Ascending aorta (tissue), 2 donors: ENCODE measurements at regions of chr12 and their contacts with region 1.

Region 1: DNA sequence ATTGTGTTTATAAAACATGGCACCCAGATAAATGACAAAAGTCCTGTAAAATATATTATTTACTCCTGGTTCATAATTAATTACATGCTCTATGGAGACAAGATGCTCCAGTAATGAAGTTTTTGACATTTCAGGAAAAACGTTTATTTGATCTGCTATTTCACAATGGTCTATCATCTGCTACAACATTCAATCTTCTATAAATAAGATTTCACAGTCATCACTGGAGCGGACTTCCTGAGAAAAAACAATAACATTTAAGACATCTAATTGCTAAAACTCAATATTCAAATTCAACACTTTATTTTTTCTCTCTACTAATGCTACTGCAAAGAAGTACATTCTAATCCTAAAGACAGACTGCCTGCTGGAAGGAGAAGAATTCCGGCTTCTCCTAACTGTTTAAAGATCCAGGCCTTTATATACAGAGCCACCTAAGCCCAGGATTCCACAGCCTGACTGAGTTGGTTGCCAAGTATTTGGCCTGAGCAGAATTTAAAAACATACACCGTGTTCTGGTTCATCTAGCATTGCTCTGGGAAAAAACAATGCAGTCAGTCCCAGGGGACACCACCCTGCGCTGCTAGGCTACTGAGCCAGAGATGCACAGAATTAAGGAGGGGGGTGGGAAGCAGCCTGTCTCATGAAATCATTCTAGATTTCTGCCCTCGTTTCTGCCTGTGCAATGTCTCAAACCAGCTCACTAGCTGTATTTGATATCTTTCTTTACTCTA is 58.0 kb downstream of the TMTC1 start:
- DNase-seq: peak in 1 of 2 donors; percentile 89
- H3K4me3 ChIP-seq: peak overlapping the region in 1 of 2 donors; percentile 45
- H3K27ac ChIP-seq: peak overlapping the region; percentile 74 to 82
- H3K4me1 ChIP-seq: peaks cover 10 to 12% of the 10 kb centered on the region in 2 donors
- H3K27me3 ChIP-seq: no peaks in the 10 kb centered on the region
- CTCF ChIP-seq: no peak

Region 2: GRCh38 chr12:29743801-29744200 is 18.0 kb after region 1 on chr12:
- intact Hi-C with region 1: loop called (anchors 2 kb)
- DNase-seq: no peak
- H3K4me3 ChIP-seq: no peak overlapping the region
- H3K27ac ChIP-seq: peak overlapping the region; percentile 44 to 74
- H3K4me1 ChIP-seq: peaks cover 3 to 21% of the 10 kb centered on the region in 2 donors
- H3K27me3 ChIP-seq: no peaks in the 10 kb centered on the region
- CTCF ChIP-seq: no peak